ENCODE measurements at regions of chr5 and their contacts with region 1.

Region 1: DNA sequence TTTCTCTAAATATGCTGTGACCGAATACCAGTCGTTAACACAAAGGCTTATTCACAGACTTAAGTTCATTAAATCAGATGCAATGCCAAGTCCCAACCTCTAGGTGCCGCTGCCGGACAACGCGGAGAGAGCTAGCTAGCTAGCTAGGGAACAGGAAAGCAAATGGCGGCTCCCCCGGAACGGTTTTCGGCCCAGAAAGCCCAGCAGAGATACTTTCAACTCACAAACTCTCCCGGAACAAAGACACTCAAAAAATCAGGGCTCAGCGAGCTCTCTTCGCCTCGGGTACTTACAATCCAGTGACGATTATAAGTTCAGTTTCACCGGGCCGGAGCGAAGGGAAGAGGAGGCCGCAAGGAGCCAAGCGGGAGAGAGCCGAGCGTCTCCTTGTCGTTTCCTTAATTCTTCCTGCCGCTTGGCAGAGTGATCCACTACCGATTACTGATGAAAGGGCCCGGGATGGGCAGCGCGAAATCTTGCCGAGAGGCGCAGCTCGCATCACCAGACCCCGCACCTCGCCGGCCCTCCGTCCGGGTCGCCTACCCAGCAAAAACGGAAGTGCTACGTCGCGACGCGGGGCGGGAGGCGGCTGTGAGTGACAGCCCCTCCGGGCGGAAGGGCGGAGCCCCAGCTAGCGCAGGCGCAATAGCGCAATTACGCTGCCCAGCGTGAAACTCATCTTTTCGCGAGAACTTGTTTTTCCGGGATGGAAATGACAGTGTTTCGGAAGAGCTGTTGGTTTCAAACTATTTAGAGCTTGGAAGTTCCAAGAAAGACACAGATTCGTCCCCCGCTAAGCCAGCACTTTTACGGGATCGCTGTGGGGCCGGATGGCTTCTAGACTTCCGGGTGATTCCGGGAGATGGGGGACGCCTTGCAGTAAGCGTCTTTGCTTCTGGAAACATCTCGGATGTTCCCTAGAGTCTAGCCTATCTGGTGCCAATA is at the start of gene TAF7:
- DNase-seq: peak; percentile 88 to 94 (median 94)
- ATAC-seq: peak; percentile 94
- H3K4me3 ChIP-seq: peak within 1 kb of the TSS; percentile 95
- H3K4me3 Mint-ChIP-seq: peak within 1 kb of the TSS; percentile 90 to 100 (median 98)
- H3K27ac ChIP-seq: peak within 1 kb of the TSS; percentile 88
- H3K27ac Mint-ChIP-seq: peak within 1 kb of the TSS; percentile 97 to 100 (median 99)
- H3K4me1 ChIP-seq: peaks cover 7% of the 10 kb centered on the region in 2 donors
- H3K4me1 Mint-ChIP-seq: peaks cover 18 to 40% (median 27%) of the 10 kb centered on the region in 7 donors
- H3K27me3 ChIP-seq: no peaks in the 10 kb centered on the region
- H3K27me3 Mint-ChIP-seq: peaks cover 0 to 3% (median 0%) of the 10 kb centered on the region in 5 donors
- total RNA-seq, gene TAF7: 64.5 to 115 (median 84.9) TPM

Region 2: DNA sequence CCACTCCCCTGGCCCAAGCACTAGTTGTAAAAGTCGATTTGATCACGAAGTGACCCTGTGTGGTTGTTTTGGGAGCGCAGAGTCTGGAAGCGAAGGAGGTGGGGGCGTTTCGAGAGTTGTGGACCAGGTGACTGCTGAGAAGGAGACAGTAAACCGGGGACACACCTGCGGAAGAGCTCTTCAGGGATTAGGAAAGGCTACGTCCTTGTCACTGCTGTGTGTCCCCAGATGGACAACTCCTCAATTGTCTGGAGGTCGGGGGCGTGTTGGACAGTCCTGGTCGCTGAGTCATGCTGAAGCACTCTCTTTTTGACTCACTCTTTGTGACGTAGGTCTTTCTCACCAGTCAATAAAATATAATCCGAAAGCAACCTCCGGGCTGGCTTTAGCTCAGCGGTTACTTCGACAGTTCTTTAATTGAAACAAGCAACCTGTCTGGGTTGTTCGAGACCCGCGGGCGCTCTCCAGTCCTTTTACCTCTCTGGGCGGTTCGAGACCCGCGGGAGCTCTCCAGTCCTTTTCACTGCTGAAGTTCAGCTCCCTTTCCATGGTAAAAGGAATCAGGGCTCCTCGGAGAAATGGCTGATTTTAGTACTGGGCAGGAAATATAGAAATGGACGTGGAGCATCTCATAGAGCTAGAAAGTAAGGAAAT is 609.5 kb before region 1 on chr5:
- CTCF ChIA-PET with region 1: no interaction called
- POLR2A ChIA-PET with region 1: no interaction called
- intact Hi-C with region 1: loop called in 1 of 2 experiments (anchors 5 kb)
- DNase-seq: peak; percentile 57 to 94 (median 87)
- ATAC-seq: peak; percentile 89
- H3K4me3 ChIP-seq: peak overlapping the region; percentile 96
- H3K4me3 Mint-ChIP-seq: peak overlapping the region; percentile 95 to 100 (median 99)
- H3K27ac ChIP-seq: peak overlapping the region; percentile 72
- H3K27ac Mint-ChIP-seq: peak overlapping the region; percentile 98 to 100 (median 99)
- H3K4me1 ChIP-seq: peaks cover 0 to 5% of the 10 kb centered on the region in 2 donors
- H3K4me1 Mint-ChIP-seq: peaks cover 6 to 35% (median 25%) of the 10 kb centered on the region in 7 donors
- H3K27me3 ChIP-seq: no peaks in the 10 kb centered on the region
- H3K27me3 Mint-ChIP-seq: peaks cover 0 to 11% (median 0%) of the 10 kb centered on the region in 5 donors

Region 3: GRCh38 chr5:141512390-141512910 is 192.0 kb after region 1 on chr5:
- CTCF ChIA-PET with region 1: interaction called, 15 read pairs
- POLR2A ChIA-PET with region 1: interaction called, 17 read pairs
- intact Hi-C with region 1: loop called (anchors 1 kb)
- DNase-seq: peak; percentile 48 to 87 (median 74)
- ATAC-seq: peak; percentile 79
- H3K4me3 ChIP-seq: peak overlapping the region; percentile 59
- H3K4me3 Mint-ChIP-seq: peak overlapping the region; percentile 84 to 97 (median 90)
- H3K27ac ChIP-seq: peak overlapping the region; percentile 39
- H3K27ac Mint-ChIP-seq: peak overlapping the region; percentile 27 to 83 (median 58)
- H3K4me1 ChIP-seq: peaks cover 0 to 13% of the 10 kb centered on the region in 2 donors
- H3K4me1 Mint-ChIP-seq: peaks cover 21 to 35% (median 26%) of the 10 kb centered on the region in 7 donors
- H3K27me3 ChIP-seq: no peaks in the 10 kb centered on the region
- H3K27me3 Mint-ChIP-seq: peaks cover 0 to 3% (median 0%) of the 10 kb centered on the region in 5 donors

Region 4: DNA sequence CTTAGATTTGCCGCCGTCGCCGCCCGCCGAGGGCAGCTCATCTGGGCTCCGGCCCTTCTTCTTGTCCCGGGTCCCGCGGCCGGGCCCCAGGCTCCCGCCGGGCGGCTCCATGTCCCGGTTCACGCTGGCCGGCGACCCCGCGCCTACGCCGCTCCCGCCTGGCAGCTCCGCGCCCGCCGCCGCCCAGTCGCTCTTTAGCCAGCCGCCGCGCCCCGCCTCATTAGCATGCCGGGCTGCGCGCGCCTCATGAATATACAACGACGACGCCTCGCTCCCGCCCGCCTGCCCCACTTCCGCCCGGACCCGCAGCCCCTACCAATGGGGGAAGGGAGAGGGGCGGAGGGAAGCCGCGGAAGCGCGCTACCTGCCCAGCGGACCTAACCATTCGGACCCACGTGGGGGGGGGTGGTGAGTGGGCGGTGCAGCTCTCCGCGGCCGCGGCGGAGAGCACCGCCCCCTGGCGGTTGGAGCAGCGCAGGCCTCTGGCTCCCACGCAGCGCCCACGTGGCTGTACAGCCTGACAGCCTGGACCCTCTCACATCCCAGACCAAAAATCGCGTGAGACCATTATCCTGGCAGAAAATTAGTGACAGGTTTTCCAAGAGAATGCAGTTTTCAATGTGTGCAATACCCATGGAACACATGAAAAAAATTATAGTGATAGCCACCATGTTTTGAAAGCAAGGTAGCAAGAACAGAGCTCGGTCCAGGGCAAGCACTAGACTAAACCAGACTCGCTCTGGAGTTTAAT is 298.5 kb after region 1 on chr5 and contains the start of gene DIAPH1:
- CTCF ChIA-PET with region 1: no interaction called
- POLR2A ChIA-PET with region 1: interaction called, 9 read pairs
- intact Hi-C with region 1: loop called (anchors 1 to 5 kb)
- DNase-seq: peak; percentile 91 to 98 (median 96)
- ATAC-seq: peak; percentile 98
- H3K4me3 ChIP-seq: peak within 1 kb of the TSS; percentile 77
- H3K4me3 Mint-ChIP-seq: peak within 1 kb of the TSS; percentile 94 to 100 (median 100)
- H3K27ac ChIP-seq: peak within 1 kb of the TSS; percentile 97
- H3K27ac Mint-ChIP-seq: peak within 1 kb of the TSS; percentile 91 to 99 (median 95)
- H3K4me1 ChIP-seq: peaks cover 11 to 22% of the 10 kb centered on the region in 2 donors
- H3K4me1 Mint-ChIP-seq: peaks cover 44 to 61% (median 56%) of the 10 kb centered on the region in 7 donors
- H3K27me3 ChIP-seq: no peaks in the 10 kb centered on the region
- H3K27me3 Mint-ChIP-seq: no peaks in the 10 kb centered on the region
- total RNA-seq, gene DIAPH1: 163 to 278 (median 173) TPM

Region 5: GRCh38 chr5:141968914-141969608 is 648.6 kb after region 1 on chr5 and contains the start of gene RNF14:
- CTCF ChIA-PET with region 1: no interaction called
- POLR2A ChIA-PET with region 1: no interaction called
- intact Hi-C with region 1: loop called in 1 of 2 experiments (anchors 1 kb)
- DNase-seq: peak; percentile 90 to 96 (median 92)
- ATAC-seq: peak; percentile 97
- H3K4me3 ChIP-seq: peak within 1 kb of the TSS; percentile 69
- H3K4me3 Mint-ChIP-seq: peak within 1 kb of the TSS; percentile 88 to 97 (median 94)
- H3K27ac ChIP-seq: peak within 1 kb of the TSS; percentile 94
- H3K27ac Mint-ChIP-seq: peak within 1 kb of the TSS; percentile 92 to 98 (median 97)
- H3K4me1 ChIP-seq: peaks cover 13 to 18% of the 10 kb centered on the region in 2 donors
- H3K4me1 Mint-ChIP-seq: peaks cover 12 to 47% (median 40%) of the 10 kb centered on the region in 7 donors
- H3K27me3 ChIP-seq: no peaks in the 10 kb centered on the region
- H3K27me3 Mint-ChIP-seq: peaks cover 0 to 2% (median 0%) of the 10 kb centered on the region in 5 donors
- total RNA-seq, gene RNF14: 14.7 to 32.0 (median 24.8) TPM

Region 6: DNA sequence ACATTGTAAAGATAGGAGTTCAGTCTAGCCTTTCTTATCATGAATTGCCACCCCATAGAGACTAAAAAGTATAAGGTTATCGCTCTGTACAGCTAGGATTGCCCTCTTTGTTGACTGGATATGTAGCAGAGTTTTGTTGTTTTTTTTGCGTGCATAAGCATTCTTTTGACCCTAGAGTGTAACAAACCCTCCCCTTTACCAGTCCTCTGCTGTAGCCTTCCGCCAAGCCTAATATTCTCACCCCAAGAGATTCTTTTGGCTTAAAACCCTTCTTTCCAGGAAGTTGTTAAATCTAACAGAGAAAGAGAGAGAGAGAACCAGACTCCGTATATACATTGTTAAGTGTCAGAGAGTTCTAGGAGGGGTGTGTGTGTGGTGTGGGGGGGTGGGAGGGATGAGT is 1251.5 kb after region 1 on chr5:
- CTCF ChIA-PET with region 1: no interaction called
- POLR2A ChIA-PET with region 1: no interaction called
- intact Hi-C with region 1: no loop called
- DNase-seq: no peak
- ATAC-seq: no peak
- H3K4me3 ChIP-seq: no peak overlapping the region
- H3K4me3 Mint-ChIP-seq: no peak overlapping the region
- H3K27ac ChIP-seq: no peak overlapping the region
- H3K27ac Mint-ChIP-seq: no peak overlapping the region
- H3K4me1 ChIP-seq: no peaks in the 10 kb centered on the region
- H3K4me1 Mint-ChIP-seq: peaks cover 0 to 16% (median 7%) of the 10 kb centered on the region in 7 donors
- H3K27me3 ChIP-seq: no peaks in the 10 kb centered on the region
- H3K27me3 Mint-ChIP-seq: peaks cover 0 to 4% (median 0%) of the 10 kb centered on the region in 5 donors

Measured in naive thymus-derived CD4-positive, alpha-beta T cell (primary cell).